Activated naive CD4-positive, alpha-beta T cell treated with anti-CD3 and anti-CD28 coated beads for 36 hours (primary cell): ENCODE measurements at regions of chr2 and their contacts with region 1.

Region 1: DNA sequence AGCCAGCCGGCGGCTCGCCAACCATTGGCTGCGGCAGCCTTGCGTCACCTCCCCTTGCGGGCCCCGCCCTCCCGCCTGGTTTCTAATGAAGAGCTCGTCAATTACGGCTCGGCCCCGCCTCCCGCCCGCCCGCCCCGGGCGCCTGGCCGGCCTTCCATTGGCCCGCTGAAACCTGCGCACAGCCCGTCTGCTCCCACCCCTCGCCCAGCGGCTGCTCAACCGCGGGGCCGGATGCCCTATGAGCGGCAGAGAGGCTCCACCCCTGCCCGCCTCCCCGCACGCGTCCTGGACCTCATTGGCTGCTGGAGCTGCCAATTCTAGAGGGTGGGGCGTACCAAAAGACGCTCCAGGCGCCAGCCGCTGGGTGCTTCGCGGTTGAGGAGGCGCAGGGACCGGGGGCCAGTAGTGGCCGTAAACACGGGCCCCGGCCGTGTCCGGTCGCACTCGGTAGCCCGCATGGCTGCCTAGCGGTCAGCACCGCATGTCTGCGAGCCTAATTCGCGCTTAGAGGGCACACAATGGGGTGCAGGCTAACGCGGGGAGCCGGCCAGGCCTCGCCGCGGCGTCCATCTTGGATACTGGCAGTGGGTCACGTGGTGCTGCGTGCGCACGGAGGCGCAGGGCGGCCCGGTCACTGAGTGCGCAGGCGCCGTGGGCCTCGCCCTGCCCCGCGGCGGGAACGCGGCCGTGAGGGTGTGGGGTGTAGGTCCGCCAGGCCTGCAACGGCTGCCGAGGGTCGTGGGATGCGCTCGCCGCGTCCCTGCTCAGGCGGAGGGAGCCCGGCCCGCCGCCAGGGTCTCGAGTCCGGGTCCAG is 454 bp upstream of the HDAC4 start:
- DNase-seq: peak; percentile 99
- H3K4me3 Mint-ChIP-seq: peak overlapping the region; percentile 87
- H3K27ac Mint-ChIP-seq: peak overlapping the region; percentile 95
- H3K4me1 Mint-ChIP-seq: peaks cover 41% of the 10 kb centered on the region
- H3K27me3 Mint-ChIP-seq: no peaks in the 10 kb centered on the region

Region 2: GRCh38 chr2:238875101-238875470 is 526.2 kb before region 1 on chr2:
- CTCF ChIA-PET with region 1: no interaction called
- intact Hi-C with region 1: no loop called
- DNase-seq: no peak
- H3K4me3 Mint-ChIP-seq: no peak overlapping the region
- H3K27ac Mint-ChIP-seq: no peak overlapping the region
- H3K4me1 Mint-ChIP-seq: no peaks in the 10 kb centered on the region
- H3K27me3 Mint-ChIP-seq: peaks cover 4% of the 10 kb centered on the region

Region 3: DNA sequence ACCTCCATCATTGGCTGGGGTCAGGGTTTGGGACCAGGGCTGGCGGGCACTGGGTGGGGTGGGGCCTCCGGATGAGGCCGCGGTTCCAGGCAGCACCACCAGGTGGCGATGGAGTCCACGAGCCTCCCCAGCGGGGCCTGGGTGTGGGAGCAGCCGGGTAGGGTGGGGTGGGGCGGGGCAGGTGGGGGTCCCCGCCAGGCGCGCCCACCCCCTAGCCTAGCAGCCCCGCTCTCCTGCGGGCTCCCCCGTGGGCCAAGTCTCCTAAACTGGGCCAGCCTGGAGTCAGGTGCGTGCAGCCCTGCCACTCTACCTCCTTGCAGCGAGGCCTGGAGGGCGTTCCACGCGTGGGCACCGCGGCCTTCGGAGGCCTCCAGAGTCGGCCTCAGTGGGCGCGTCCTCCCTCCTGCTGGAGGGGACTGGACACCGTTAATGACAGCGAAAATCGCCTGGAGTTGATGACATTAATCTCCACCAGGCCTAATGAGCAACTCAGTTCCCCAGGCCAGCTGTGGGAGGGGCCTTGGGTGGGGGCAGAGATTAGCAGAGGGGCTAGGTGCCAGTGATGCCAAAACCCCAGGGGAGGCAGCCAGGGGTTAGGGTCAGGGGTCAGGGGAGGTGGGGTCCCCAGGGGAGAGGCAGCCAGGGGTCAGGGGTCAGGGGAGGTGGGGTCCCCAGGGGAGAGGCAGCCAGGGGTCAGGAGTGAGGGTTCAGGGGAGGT is 365.8 kb before region 1 on chr2:
- CTCF ChIA-PET with region 1: no interaction called
- intact Hi-C with region 1: loop called (anchors 1 kb)
- DNase-seq: peak; percentile 72
- H3K4me3 Mint-ChIP-seq: no peak overlapping the region
- H3K27ac Mint-ChIP-seq: no peak overlapping the region
- H3K4me1 Mint-ChIP-seq: no peaks in the 10 kb centered on the region
- H3K27me3 Mint-ChIP-seq: peaks cover 11% of the 10 kb centered on the region

Region 4: GRCh38 chr2:239093952-239094351 is 307.3 kb before region 1 on chr2:
- CTCF ChIA-PET with region 1: no interaction called
- intact Hi-C with region 1: no loop called
- DNase-seq: no peak
- H3K4me3 Mint-ChIP-seq: no peak overlapping the region
- H3K27ac Mint-ChIP-seq: no peak overlapping the region
- H3K4me1 Mint-ChIP-seq: no peaks in the 10 kb centered on the region
- H3K27me3 Mint-ChIP-seq: no peaks in the 10 kb centered on the region

Region 5: DNA sequence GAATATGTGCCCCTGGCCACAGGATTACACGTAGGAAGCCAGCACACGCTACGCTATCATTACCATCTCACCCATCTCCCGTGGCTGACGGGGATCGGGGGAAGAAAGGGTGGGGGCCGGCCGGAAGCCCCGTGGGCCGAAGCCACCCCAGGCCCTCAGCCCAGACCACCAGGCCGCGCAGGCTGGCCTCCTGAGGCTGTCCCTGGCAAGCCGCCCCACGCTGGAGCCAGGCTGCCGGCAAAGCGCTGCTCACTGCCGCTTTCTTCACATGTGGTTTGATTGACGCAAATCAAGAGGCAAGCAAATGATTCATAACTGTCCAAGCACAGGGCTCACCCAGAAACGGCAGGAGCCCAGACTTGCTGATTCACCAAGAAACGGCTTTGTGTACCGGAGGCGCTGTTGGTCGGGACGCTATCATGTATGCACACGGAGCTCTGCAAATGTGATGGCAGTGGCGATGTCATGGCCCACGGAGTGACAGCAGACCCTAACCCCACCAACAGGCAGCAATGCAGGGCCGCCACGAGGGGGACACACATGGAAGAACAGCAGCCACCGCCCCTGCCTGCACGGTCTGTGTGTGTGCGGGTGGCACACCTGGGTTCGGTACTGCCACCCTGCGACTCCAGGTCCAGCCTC is 126.1 kb before region 1 on chr2:
- CTCF ChIA-PET with region 1: no interaction called
- intact Hi-C with region 1: loop called (anchors 2 kb)
- DNase-seq: peak; percentile 93
- H3K4me3 Mint-ChIP-seq: peak overlapping the region; percentile 51
- H3K27ac Mint-ChIP-seq: peak overlapping the region; percentile 77
- H3K4me1 Mint-ChIP-seq: peaks cover 51% of the 10 kb centered on the region
- H3K27me3 Mint-ChIP-seq: peaks cover 24% of the 10 kb centered on the region

Region 6: DNA sequence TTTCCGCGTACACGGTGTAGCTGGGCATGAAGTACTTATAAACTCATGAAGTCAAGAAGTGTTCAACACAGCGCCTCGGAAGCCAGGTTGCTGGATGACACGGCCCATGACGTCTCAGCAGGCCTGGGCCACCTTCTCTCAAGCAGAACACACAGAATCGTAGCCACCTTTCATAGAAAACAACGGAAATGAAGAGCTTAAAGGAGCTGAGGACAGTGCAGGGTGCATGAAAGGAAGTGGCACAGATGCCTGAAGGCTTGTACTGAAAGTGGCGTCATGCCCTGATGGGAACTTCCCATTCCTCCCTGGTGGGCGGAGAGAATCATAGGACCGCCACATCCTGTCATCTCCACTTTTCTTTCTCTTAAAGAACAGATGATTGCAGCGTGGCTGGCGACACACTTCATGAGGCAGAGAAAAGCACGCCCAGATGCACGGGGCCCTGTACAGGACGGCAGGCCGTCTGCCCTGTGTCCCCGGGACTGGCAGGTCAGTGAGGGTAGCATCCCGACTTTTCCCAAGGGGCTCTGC is 31.6 kb before region 1 on chr2:
- CTCF ChIA-PET with region 1: interaction called, 3 read pairs
- intact Hi-C with region 1: loop called (anchors 1 kb)
- DNase-seq: peak; percentile 95
- H3K4me3 Mint-ChIP-seq: peak overlapping the region; percentile 76
- H3K27ac Mint-ChIP-seq: peak overlapping the region; percentile 89
- H3K4me1 Mint-ChIP-seq: peaks cover 9% of the 10 kb centered on the region
- H3K27me3 Mint-ChIP-seq: no peaks in the 10 kb centered on the region

Region 7: GRCh38 chr2:239411549-239412319 is 10.5 kb after region 1 on chr2:
- CTCF ChIA-PET with region 1: no interaction called
- intact Hi-C with region 1: no loop called
- DNase-seq: no peak
- H3K4me3 Mint-ChIP-seq: no peak overlapping the region
- H3K27ac Mint-ChIP-seq: no peak overlapping the region
- H3K4me1 Mint-ChIP-seq: peaks cover 10% of the 10 kb centered on the region
- H3K27me3 Mint-ChIP-seq: no peaks in the 10 kb centered on the region

Region 8: GRCh38 chr2:239882331-239882732 is 481.1 kb after region 1 on chr2:
- CTCF ChIA-PET with region 1: no interaction called
- intact Hi-C with region 1: loop called (anchors 2 kb)
- DNase-seq: peak; percentile 77
- H3K4me3 Mint-ChIP-seq: no peak overlapping the region
- H3K27ac Mint-ChIP-seq: no peak overlapping the region
- H3K4me1 Mint-ChIP-seq: peaks cover 3% of the 10 kb centered on the region
- H3K27me3 Mint-ChIP-seq: peaks cover 7% of the 10 kb centered on the region

Region 9: GRCh38 chr2:240566203-240567136 is 1165.2 kb after region 1 on chr2:
- CTCF ChIA-PET with region 1: no interaction called
- intact Hi-C with region 1: loop called (anchors 1 kb)
- DNase-seq: peak; percentile 96
- H3K4me3 Mint-ChIP-seq: peak overlapping the region; percentile 92
- H3K27ac Mint-ChIP-seq: peak overlapping the region; percentile 99
- H3K4me1 Mint-ChIP-seq: peaks cover 66% of the 10 kb centered on the region
- H3K27me3 Mint-ChIP-seq: no peaks in the 10 kb centered on the region